ENCODE measurements at regions of chr10 and their contacts with region 1.

Region 1: GRCh38 chr10:100364735-100365391 is 17.8 kb downstream of the SCD start:
- DNase-seq: no peak
- H3K4me3 ChIP-seq: no peak overlapping the region
- H3K27ac ChIP-seq: no peak overlapping the region
- H3K4me1 ChIP-seq: peaks cover 0 to 6% (median 0%) of the 10 kb centered on the region in 4 experiments; a peak in 1 of 7 replicates
- H3K27me3 ChIP-seq: no peaks in the 10 kb centered on the region
- CTCF ChIP-seq: no peak; a peak in 1 of 4 replicates
- EP300 ChIP-seq: no peak
- POLR2A ChIP-seq: peak in 1 of 2 experiments; percentile 16; a peak in 1 of 3 replicates
- RAD21 ChIP-seq: no peak

Region 2: GRCh38 chr10:100311307-100311706 is 53.6 kb before region 1 on chr10:
- CTCF ChIA-PET with region 1: no interaction called
- POLR2A ChIA-PET with region 1: no interaction called
- DNase-seq: no peak
- H3K4me3 ChIP-seq: no peak overlapping the region
- H3K27ac ChIP-seq: no peak overlapping the region
- H3K4me1 ChIP-seq: no peaks in the 10 kb centered on the region
- H3K27me3 ChIP-seq: no peaks in the 10 kb centered on the region; a peak in 1 of 7 replicates
- CTCF ChIP-seq: no peak
- EP300 ChIP-seq: no peak
- POLR2A ChIP-seq: no peak
- RAD21 ChIP-seq: no peak

Region 3: GRCh38 chr10:100346765-100347567 is 17.9 kb before region 1 on chr10 and contains the start of gene SCD:
- CTCF ChIA-PET with region 1: interaction called, 8 read pairs
- POLR2A ChIA-PET with region 1: interaction called, 103 read pairs
- DNase-seq: peak; percentile 86 to 91
- H3K4me3 ChIP-seq: peak within 1 kb of the TSS; percentile 85 to 95 (median 90)
- H3K27ac ChIP-seq: peak within 1 kb of the TSS; percentile 80
- H3K4me1 ChIP-seq: peaks cover 10 to 30% (median 20%) of the 10 kb centered on the region in 4 experiments
- H3K27me3 ChIP-seq: no peaks in the 10 kb centered on the region
- CTCF ChIP-seq: no peak
- EP300 ChIP-seq: peak in 1 of 2 experiments; percentile 32; a peak in 1 of 3 replicates
- POLR2A ChIP-seq: peak; percentile 25 to 82
- RAD21 ChIP-seq: no peak
- total RNA-seq, gene SCD: 604 and 621 TPM in 2 replicates

Measured in H1 (cell line).